T-cell (primary cell): ENCODE measurements at regions of chr19 and their contacts with region 1.

Region 1: GRCh38 chr19:29263305-29264135 is 50.6 kb upstream of the UQCRFS1 start:
- DNase-seq: peak in 34 of 35 experiments; percentile 12 to 74 (median 44)
- ATAC-seq: peak; percentile 43 to 59 (median 46)
- H3K4me3 ChIP-seq: no peak overlapping the region
- H3K4me3 Mint-ChIP-seq: no peak overlapping the region
- H3K27ac ChIP-seq: no peak overlapping the region
- H3K27ac Mint-ChIP-seq: no peak overlapping the region
- H3K4me1 ChIP-seq: peaks cover 0 to 12% of the 10 kb centered on the region in 2 experiments
- H3K4me1 Mint-ChIP-seq: peaks cover 0 to 7% (median 0%) of the 10 kb centered on the region in 3 donors
- H3K27me3 ChIP-seq: peaks cover 0 to 21% of the 10 kb centered on the region in 2 experiments
- H3K27me3 Mint-ChIP-seq: peaks cover 31 to 34% of the 10 kb centered on the region in 2 donors

Region 2: GRCh38 chr19:28737021-28737895 is 526.3 kb before region 1 on chr19:
- CTCF ChIA-PET with region 1: interaction called, 5 to 20 read pairs
- POLR2A ChIA-PET with region 1: no interaction called
- DNase-seq: peak in 1 of 35 experiments; percentile 49
- ATAC-seq: peak in 2 of 4 experiments; percentile 24 to 39
- H3K4me3 ChIP-seq: no peak overlapping the region
- H3K4me3 Mint-ChIP-seq: peak overlapping the region in 1 of 3 donors; percentile 36
- H3K27ac ChIP-seq: no peak overlapping the region
- H3K27ac Mint-ChIP-seq: peak overlapping the region in 1 of 2 donors; percentile 37
- H3K4me1 ChIP-seq: peaks cover 0 to 4% of the 10 kb centered on the region in 2 experiments
- H3K4me1 Mint-ChIP-seq: peaks cover 4 to 6% (median 5%) of the 10 kb centered on the region in 3 donors
- H3K27me3 ChIP-seq: no peaks in the 10 kb centered on the region
- H3K27me3 Mint-ChIP-seq: peaks cover 3 to 6% of the 10 kb centered on the region in 2 donors

Region 3: DNA sequence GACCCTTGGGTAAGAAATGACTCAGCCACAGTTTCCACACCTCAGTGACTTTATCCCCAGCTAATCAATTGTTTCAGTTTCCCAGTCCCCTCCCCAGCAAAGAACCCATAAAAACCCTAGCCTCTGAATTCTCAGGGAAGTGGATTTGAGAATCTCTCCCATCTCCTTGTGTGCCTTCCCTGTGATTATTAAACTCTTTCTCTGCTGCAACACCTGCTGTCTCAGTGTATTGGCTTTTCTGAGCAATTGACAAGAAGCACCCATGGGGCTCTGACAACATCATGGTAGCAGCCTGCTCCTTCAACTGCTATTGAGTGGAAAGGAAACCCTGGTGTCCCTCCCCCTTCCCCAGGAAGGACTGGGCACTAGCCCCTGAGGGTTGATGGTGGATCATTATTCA is 124.3 kb before region 1 on chr19:
- CTCF ChIA-PET with region 1: no interaction called
- POLR2A ChIA-PET with region 1: no interaction called
- DNase-seq: no peak
- ATAC-seq: no peak
- H3K4me3 ChIP-seq: no peak overlapping the region
- H3K4me3 Mint-ChIP-seq: no peak overlapping the region
- H3K27ac ChIP-seq: no peak overlapping the region
- H3K27ac Mint-ChIP-seq: no peak overlapping the region
- H3K4me1 ChIP-seq: no peaks in the 10 kb centered on the region
- H3K4me1 Mint-ChIP-seq: no peaks in the 10 kb centered on the region
- H3K27me3 ChIP-seq: peaks cover 0 to 2% of the 10 kb centered on the region in 2 experiments
- H3K27me3 Mint-ChIP-seq: no peaks in the 10 kb centered on the region